Right lobe of liver (tissue), 6 donors: ENCODE measurements at regions of chr1 and their contacts with region 1.

Region 1: DNA sequence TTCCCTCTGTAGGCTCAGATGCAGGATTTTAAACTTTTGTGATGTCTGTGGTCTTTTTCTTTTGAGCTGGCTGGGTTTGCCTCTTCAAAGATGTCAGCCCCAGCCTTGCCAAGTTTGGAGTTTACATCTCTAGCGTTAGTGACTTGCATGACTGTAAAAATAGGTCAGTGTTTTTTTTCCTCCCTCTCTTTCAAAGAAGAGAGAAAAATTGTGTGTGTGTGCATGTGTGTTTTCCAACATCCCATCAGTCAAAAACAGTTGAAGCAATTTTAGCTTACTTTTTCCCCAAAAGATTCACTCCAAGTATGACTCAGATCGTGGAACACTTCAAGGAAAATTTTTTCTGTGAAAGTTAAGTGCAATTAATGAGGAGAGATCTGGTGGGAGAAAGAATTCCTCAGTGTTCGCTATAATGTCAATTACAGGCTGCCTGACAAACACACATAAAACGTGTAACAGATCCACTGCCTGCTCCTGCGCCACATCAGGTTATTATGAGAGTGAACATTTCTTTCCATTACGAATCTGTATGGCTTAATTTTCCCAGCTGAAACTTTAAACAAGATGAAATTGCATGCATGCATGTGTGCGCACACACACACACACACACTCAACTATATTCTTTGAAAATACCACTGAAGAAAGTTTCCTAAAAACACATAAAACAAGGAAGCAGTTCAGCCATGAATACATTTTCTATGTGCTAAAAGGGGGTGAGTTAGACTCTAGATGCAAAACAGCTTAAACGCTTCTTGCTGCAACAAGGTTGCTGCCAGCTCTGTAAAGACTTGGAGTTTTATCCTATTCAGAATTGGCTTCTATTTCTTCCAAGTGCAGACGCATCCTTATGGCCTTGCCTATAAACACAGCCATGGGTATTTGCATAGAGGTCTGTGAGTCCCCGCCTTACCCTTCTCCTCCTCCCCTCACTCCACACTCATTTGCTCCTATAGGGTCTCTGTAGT is 55.5 kb downstream of the TLR5 start:
- DNase-seq: no peak
- ATAC-seq: no peak
- H3K4me3 ChIP-seq: no peak overlapping the region
- H3K27ac ChIP-seq: no peak overlapping the region
- H3K4me1 ChIP-seq: no peaks in the 10 kb centered on the region
- H3K27me3 ChIP-seq: no peaks in the 10 kb centered on the region
- CTCF ChIP-seq: no peak
- POLR2A ChIP-seq: no peak

Region 2: GRCh38 chr1:222786121-222786520 is 301.5 kb before region 1 on chr1:
- intact Hi-C with region 1: loop called in 1 of 2 experiments (anchors 5 kb)
- DNase-seq: no peak
- ATAC-seq: no peak
- H3K4me3 ChIP-seq: no peak overlapping the region
- H3K27ac ChIP-seq: no peak overlapping the region
- H3K4me1 ChIP-seq: no peaks in the 10 kb centered on the region
- H3K27me3 ChIP-seq: no peaks in the 10 kb centered on the region
- CTCF ChIP-seq: no peak
- POLR2A ChIP-seq: no peak

Region 3: DNA sequence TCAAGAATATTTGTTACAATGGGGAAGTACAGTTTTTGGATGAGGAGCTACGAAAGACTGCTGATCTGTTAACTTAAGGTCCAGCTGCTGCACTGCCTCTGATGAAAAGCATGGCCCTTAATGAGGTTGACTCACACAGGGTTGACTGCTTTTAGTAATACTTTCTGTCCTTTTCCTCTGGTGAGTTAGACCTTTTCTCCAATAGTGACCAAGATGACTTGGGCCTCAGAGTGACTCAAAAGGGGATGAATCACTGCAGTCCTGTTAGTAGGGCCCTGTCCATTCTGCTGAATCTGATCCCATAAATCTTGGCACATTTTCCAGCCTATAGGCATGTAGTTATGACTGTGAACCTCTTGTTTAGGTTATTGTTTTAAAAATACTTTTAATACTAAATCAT is 270.0 kb before region 1 on chr1:
- intact Hi-C with region 1: no loop called
- DNase-seq: no peak
- ATAC-seq: peak in 1 of 4 donors; percentile 16
- H3K4me3 ChIP-seq: no peak overlapping the region
- H3K27ac ChIP-seq: no peak overlapping the region
- H3K4me1 ChIP-seq: peaks cover 0 to 5% (median 0%) of the 10 kb centered on the region in 4 donors
- H3K27me3 ChIP-seq: no peaks in the 10 kb centered on the region
- CTCF ChIP-seq: no peak
- POLR2A ChIP-seq: no peak

Region 4: GRCh38 chr1:222918801-222919477 is 168.6 kb before region 1 on chr1:
- intact Hi-C with region 1: no loop called
- DNase-seq: no peak
- ATAC-seq: no peak
- H3K4me3 ChIP-seq: no peak overlapping the region
- H3K27ac ChIP-seq: no peak overlapping the region
- H3K4me1 ChIP-seq: no peaks in the 10 kb centered on the region
- H3K27me3 ChIP-seq: no peaks in the 10 kb centered on the region
- CTCF ChIP-seq: no peak
- POLR2A ChIP-seq: no peak

Region 5: GRCh38 chr1:223001653-223002634 is 85.6 kb before region 1 on chr1:
- intact Hi-C with region 1: no loop called
- DNase-seq: no peak
- ATAC-seq: peak; percentile 42 to 75 (median 52)
- H3K4me3 ChIP-seq: no peak overlapping the region
- H3K27ac ChIP-seq: peak overlapping the region in 1 of 3 donors; percentile 50
- H3K4me1 ChIP-seq: peaks cover 0 to 25% (median 5%) of the 10 kb centered on the region in 4 donors
- H3K27me3 ChIP-seq: no peaks in the 10 kb centered on the region
- CTCF ChIP-seq: no peak
- POLR2A ChIP-seq: no peak